ENCODE measurements at regions of chr6 and their contacts with region 1.

Region 1: GRCh38 chr6:163585932-163586437 is 171.5 kb downstream of the QKI start:
- DNase-seq: no peak

Region 2: GRCh38 chr6:162442687-162443086 is 1143.3 kb before region 1 on chr6:
- intact Hi-C with region 1: loop called (anchors 10 kb)
- DNase-seq: peak in 6 of 10 donors; percentile 36 to 88 (median 53)

Region 3: DNA sequence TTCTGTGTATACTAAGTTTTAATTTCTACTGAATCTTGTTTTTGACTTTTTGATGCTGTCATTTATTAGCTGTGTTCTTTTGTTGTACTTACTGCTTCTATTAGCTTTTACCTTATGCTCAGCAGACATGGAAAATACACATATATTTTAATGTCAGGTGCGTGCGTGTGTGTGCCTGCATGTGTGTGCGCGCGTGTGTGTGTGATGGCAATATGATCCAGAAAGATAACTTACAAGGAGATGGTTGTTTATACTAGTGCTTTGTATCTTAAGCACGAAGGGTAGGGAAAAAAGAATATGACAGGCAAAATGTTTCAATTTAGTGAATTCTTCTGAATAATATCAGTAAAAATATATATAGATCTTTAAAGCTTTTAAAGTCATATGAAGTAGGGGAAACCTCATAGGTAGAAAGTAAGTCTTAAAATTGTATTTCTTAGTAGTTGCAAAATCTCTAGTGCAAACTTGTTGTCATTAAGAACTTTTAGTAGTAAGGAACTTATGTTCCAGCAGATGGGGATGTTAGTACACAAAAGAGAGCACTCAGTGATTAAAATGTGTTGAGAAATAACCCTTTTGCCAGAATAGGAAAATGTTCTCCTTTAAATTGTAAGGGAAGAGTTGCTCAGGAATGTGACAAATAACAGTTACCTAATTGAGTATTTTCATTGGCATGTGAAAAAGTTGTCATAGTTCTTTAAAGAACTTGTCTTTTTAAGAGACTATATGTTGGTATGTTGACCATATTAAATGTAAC is 158.3 kb before region 1 on chr6:
- intact Hi-C with region 1: loop called (anchors 10 kb)
- DNase-seq: no peak

Region 4: GRCh38 chr6:163485388-163485851 is 100.6 kb before region 1 on chr6:
- intact Hi-C with region 1: no loop called
- DNase-seq: no peak

Region 5: DNA sequence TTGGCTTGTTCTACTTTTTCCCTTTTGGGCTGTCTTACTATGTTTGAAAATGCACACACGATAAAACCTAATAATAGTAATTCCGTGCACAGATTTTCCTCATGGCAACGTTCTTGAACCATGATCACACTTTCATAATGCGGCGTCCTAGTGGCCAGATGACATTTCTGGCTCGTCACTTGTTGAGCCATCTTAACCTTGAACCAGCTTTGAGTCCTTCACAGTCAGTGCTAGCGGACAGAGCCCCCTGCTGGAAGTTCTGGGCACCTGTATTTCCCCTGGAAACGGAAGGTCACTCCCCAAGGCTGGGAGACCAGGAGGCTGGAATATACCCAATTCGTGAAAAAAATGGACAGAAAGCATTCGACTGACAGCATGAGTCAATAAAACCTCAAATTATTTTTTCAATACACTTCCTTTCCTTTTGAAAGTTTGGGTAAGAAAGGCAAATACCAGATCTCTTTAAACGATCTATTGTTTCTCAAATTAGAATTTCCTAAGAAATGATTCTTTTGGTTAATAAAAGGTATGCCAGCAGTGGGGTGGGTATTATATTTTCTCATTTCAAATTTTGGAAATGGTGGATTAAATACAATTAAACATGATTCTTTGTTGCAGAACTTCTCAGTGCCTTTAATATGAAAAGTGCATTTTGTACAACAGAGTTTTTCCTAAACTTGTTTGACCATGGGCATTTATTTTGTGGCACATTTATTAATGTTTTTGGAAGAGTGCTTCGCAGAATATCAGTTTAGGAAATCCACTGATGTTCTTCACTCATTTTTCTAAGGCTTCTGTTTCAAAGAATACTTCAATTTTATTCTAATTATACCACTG is 370.8 kb after region 1 on chr6:
- intact Hi-C with region 1: loop called (anchors 10 kb)
- DNase-seq: peak in 9 of 10 donors; percentile 45 to 95 (median 76)

Measured in posterior cingulate gyrus (tissue), 11 donors.